Activated B cell treated with CpG ODN at 0.5 μM for 24 hours (primary cell): ENCODE measurements at regions of chr3 and their contacts with region 1.

Region 1: DNA sequence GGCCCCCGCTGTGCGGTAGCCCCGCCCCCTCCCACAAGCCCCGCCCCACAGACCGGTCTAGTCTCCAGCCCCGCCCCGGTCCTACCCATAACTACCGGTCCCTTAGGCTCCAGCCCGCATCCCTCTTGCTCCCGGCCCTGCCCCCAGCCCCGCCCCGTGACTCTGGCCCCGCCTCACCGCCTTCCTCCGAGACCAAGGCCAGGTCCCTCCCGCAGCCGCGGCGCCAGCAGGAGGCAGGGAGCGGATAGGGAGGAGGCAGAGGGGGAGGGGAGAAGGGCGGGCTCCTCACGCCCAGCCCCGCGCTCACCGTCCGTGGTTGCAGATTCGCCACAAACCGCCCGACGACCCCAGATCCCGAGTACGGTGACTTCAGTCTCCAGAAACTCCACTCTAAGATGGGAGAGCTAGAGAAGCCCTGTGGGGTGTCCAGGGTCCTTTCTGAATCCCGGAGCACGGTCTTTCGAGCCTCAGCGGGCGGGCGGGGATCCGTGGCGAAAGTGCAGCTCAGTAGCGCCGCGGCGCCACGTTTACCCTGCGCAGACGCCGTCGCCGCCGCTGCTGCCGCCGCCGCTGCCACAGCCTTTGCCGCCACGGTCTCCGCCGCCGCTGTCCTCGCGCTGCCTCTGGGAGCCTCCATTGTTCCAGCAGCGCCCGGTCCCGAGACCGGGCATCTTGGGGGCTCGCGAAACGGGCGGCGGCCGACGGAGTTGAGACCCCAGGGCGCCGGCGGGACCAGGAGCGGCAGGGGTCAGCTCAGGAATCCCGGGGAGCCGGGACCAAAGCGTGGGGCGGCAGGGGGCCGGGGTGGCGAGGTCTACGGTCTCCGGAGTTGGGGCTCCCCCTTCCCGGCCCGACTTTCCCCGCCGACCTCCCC is at the start of gene BRPF1:
- DNase-seq: peak; percentile 91
- ATAC-seq: peak; percentile 95
- H3K4me3 Mint-ChIP-seq: peak within 1 kb of the TSS; percentile 95
- H3K27ac Mint-ChIP-seq: peak within 1 kb of the TSS; percentile 99
- H3K4me1 Mint-ChIP-seq: peaks cover 48% of the 10 kb centered on the region
- H3K27me3 Mint-ChIP-seq: no peaks in the 10 kb centered on the region
- CTCF ChIP-seq: no peak
- total RNA-seq, gene BRPF1: 33.5 and 35.2 TPM in 2 replicates

Region 2: DNA sequence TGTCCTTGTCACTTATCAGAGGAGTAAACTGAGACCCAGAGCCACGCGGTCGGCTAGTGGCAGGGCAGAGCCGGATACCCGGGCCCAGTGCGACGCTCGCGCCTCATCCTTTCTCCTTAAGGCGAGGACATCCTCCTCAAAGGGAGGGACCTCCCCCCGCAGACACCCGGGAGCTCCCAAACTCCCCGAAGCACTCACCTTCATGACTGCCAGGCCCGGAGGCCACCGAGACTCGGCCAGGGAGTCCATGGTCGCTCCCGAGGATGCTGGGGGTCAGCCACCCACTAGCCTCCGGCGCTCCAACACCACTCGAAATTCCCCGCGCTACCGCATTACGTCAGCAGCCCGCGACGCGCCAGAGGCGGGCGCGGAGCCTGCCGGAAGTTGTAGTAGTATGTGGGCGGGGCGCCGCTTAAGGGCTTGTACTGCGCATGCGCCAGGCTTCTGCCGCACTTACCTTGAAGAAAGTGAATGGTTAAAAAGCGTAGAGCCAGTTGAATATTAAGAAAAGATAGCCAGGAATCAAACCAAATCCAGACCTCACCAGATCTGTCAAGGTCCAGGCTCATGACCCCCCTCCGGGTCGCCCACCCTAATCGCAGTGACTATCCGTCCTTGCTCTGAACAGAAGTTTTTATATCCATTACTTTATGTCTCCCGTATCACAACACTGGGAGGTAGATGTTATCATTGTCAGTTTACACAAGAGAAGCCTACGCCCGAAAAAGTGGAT is 768.1 kb before region 1 on chr3 and contains the start of gene RAD18:
- CTCF ChIA-PET with region 1: no interaction called
- POLR2A ChIA-PET with region 1: no interaction called
- intact Hi-C with region 1: loop called (anchors 10 kb)
- DNase-seq: peak; percentile 91
- ATAC-seq: peak; percentile 96
- H3K4me3 Mint-ChIP-seq: peak within 1 kb of the TSS; percentile 95
- H3K27ac Mint-ChIP-seq: peak within 1 kb of the TSS; percentile 89
- H3K4me1 Mint-ChIP-seq: peaks cover 31% of the 10 kb centered on the region
- H3K27me3 Mint-ChIP-seq: peaks cover 5% of the 10 kb centered on the region
- CTCF ChIP-seq: no peak
- total RNA-seq, gene RAD18: 16.6 and 21.6 TPM in 2 replicates

Region 3: DNA sequence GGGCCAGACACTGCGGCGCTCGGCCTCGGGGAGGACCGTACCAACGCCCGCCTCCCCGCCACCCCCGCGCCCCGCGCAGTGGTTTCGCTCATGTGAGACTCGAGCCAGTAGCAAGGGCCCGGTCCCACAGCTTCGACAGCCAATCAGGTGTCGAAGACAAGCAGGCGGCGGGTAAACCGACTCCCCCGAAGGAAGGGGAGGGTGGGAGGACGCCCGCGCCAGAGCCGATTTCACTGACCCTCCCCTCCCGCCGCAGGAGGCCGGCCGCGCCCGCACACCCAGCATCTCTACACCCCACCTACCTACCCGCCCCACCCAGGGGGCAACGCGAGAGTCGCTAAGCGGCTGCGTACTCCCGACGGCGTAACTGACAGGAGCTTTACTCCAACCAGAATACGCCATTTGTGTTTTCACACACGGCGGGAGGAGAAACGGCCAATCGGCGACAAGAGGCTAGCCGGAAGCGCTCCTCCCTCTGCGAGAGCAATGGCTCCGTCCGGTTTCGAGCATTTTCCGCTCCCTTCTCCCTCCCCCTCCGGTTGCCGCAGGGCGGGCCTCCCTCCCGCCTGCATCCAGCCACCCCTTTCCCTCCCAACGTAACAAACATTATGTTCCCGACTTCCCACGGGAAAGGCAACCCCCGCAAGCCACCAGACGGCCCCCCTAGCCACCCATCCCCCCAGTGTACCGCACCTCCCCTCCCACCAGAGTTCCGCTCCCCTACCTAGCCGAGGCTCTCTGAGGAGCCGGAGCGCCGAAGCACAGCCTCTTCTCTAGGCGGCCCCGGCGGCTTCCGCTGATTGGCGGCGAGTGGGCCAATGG is 334.5 kb before region 1 on chr3:
- CTCF ChIA-PET with region 1: no interaction called
- POLR2A ChIA-PET with region 1: interaction called, 10 read pairs
- intact Hi-C with region 1: loop called (anchors 1 kb)
- DNase-seq: peak; percentile 99
- ATAC-seq: peak; percentile 71
- H3K4me3 Mint-ChIP-seq: peak overlapping the region; percentile 98
- H3K27ac Mint-ChIP-seq: peak overlapping the region; percentile 100
- H3K4me1 Mint-ChIP-seq: peaks cover 61% of the 10 kb centered on the region
- H3K27me3 Mint-ChIP-seq: no peaks in the 10 kb centered on the region
- CTCF ChIP-seq: no peak

Region 4: DNA sequence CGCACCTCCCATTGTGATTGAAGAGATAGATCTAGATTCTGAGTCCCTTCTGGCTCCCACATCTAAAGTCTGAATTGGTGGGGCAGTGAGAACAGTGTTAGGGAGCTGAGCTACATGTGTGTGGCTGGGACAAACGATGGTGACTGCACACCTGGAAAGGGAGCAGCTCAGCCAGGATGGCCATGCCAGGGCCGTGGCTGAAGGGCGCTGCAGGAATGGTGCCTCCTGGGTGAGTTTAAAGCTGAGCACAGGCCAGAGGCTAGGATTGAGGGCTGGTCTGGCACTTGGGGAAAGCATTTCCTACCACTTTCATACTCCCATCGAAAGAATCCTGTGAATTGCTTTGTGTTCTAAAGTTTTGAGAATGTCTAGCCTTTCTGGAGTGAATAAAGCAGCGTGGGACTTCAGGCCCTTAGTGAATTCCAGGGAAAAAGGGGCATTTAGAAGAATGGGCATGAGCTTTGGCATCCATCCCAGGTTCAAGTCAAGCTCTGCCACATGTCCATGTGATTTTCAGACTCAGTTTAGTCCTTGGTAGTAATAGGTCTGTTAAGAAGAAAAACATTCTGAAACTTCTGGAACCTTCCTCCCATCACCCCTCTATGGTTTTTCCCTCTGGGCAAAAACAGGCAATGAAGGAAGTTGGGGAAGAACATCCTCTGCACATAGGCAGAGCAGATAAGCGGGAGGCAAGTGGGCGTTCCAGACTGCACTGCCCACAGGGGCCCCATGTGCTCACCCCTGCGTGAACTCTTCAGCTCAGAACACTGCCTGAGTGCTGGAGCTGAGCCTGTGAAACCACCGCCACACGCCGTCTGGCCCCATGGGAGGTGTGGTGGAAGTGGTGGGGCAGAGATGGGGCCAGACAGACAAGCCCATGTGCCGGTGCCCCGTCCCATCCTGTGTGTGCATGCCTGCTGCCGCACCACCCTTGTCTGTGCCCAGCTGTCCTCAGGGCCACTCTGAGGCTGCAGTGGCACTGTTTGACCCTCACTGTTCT is 40.7 kb before region 1 on chr3:
- CTCF ChIA-PET with region 1: interaction called, 3 read pairs
- POLR2A ChIA-PET with region 1: interaction called, 8 read pairs
- intact Hi-C with region 1: loop called (anchors 1 kb)
- DNase-seq: peak; percentile 60
- ATAC-seq: peak; percentile 99
- H3K4me3 Mint-ChIP-seq: no peak overlapping the region
- H3K27ac Mint-ChIP-seq: peak overlapping the region; percentile 12
- H3K4me1 Mint-ChIP-seq: peaks cover 24% of the 10 kb centered on the region
- H3K27me3 Mint-ChIP-seq: no peaks in the 10 kb centered on the region
- CTCF ChIP-seq: no peak

Region 5: GRCh38 chr3:9809615-9810432 is 78.4 kb after region 1 on chr3 and contains the start of gene TTLL3:
- CTCF ChIA-PET with region 1: interaction called, 3 read pairs
- POLR2A ChIA-PET with region 1: interaction called, 13 read pairs
- intact Hi-C with region 1: loop called (anchors 5 kb)
- DNase-seq: peak; percentile 55
- ATAC-seq: peak; percentile 69
- H3K4me3 Mint-ChIP-seq: peak within 1 kb of the TSS; percentile 91
- H3K27ac Mint-ChIP-seq: peak within 1 kb of the TSS; percentile 98
- H3K4me1 Mint-ChIP-seq: peaks cover 33% of the 10 kb centered on the region
- H3K27me3 Mint-ChIP-seq: no peaks in the 10 kb centered on the region
- CTCF ChIP-seq: no peak
- total RNA-seq, gene TTLL3: 51.4 and 61.9 TPM in 2 replicates

Region 6: GRCh38 chr3:9986237-9986725 is 254.8 kb after region 1 on chr3:
- CTCF ChIA-PET with region 1: no interaction called
- POLR2A ChIA-PET with region 1: interaction called, 4 read pairs
- intact Hi-C with region 1: loop called (anchors 2 kb)
- DNase-seq: no peak
- ATAC-seq: peak; percentile 28
- H3K4me3 Mint-ChIP-seq: peak overlapping the region; percentile 98
- H3K27ac Mint-ChIP-seq: peak overlapping the region; percentile 100
- H3K4me1 Mint-ChIP-seq: peaks cover 24% of the 10 kb centered on the region
- H3K27me3 Mint-ChIP-seq: no peaks in the 10 kb centered on the region
- CTCF ChIP-seq: no peak

Region 7: GRCh38 chr3:11719406-11720230 is 1988.2 kb after region 1 on chr3:
- CTCF ChIA-PET with region 1: no interaction called
- POLR2A ChIA-PET with region 1: no interaction called
- intact Hi-C with region 1: loop called (anchors 5 kb)
- DNase-seq: peak; percentile 76
- ATAC-seq: peak; percentile 69
- H3K4me3 Mint-ChIP-seq: peak overlapping the region; percentile 94
- H3K27ac Mint-ChIP-seq: no peak overlapping the region
- H3K4me1 Mint-ChIP-seq: peaks cover 21% of the 10 kb centered on the region
- H3K27me3 Mint-ChIP-seq: no peaks in the 10 kb centered on the region
- CTCF ChIP-seq: no peak